GM12878 (cell line): ENCODE measurements at regions of chr6 and their contacts with region 1.

Region 1: GRCh38 chr6:127484212-127484858 is 25.1 kb upstream of the KIAA0408 start:
- DNase-seq: peak; percentile 39
- ATAC-seq: peak; percentile 98
- H3K4me3 ChIP-seq: peak overlapping the region; percentile 9; the same call in 1 of the 2 replicates
- H3K27ac ChIP-seq: peak overlapping the region; percentile 19; the same call in 1 of the 2 replicates
- H3K4me1 ChIP-seq: peaks cover 9% of the 10 kb centered on the region
- H3K27me3 ChIP-seq: no peaks in the 10 kb centered on the region
- CTCF ChIP-seq: no peak
- EP300 ChIP-seq: no peak; a peak in 1 of 4 replicates
- POLR2A ChIP-seq: no peak
- RAD21 ChIP-seq: no peak

Region 2: DNA sequence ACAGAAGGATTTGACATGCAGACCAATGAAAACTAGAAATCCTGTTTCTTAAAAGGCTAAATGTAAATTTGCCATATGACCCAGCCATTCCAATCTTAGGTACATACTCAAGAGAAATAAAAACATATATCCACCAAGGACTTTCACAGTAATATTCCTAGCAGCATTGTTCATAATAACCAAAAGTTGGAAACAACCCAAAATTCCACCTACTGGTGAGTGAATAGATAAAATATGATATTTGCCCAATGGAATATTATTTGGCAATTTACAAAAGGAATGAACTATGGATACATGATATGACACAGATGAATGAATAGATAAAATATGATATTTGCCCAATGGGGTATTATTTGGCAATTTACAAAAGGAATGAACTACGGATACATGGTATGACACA is 12.1 kb after region 1 on chr6:
- CTCF ChIA-PET with region 1: interaction called, 6 read pairs
- POLR2A ChIA-PET with region 1: interaction called, 3 read pairs
- RAD21 ChIA-PET with region 1: interaction called, 4 read pairs
- SMC1A ChIA-PET with region 1: interaction called, 21 read pairs
- in situ Hi-C with region 1: no loop called
- intact Hi-C with region 1: no loop called
- DNase-seq: no peak
- ATAC-seq: no peak
- H3K4me3 ChIP-seq: no peak overlapping the region
- H3K27ac ChIP-seq: no peak overlapping the region
- H3K4me1 ChIP-seq: no peaks in the 10 kb centered on the region
- H3K27me3 ChIP-seq: no peaks in the 10 kb centered on the region
- CTCF ChIP-seq: no peak
- EP300 ChIP-seq: no peak
- POLR2A ChIP-seq: no peak
- RAD21 ChIP-seq: no peak

Region 3: GRCh38 chr6:127570739-127571389 is 86.5 kb after region 1 on chr6:
- CTCF ChIA-PET with region 1: no interaction called
- POLR2A ChIA-PET with region 1: no interaction called
- RAD21 ChIA-PET with region 1: no interaction called
- SMC1A ChIA-PET with region 1: no interaction called
- in situ Hi-C with region 1: no loop called
- intact Hi-C with region 1: no loop called
- DNase-seq: no peak
- ATAC-seq: peak; percentile 84
- H3K4me3 ChIP-seq: no peak overlapping the region
- H3K27ac ChIP-seq: no peak overlapping the region
- H3K4me1 ChIP-seq: no peaks in the 10 kb centered on the region
- H3K27me3 ChIP-seq: no peaks in the 10 kb centered on the region
- CTCF ChIP-seq: no peak
- EP300 ChIP-seq: peak in 1 of 2 experiments; percentile 37; a peak in 1 of 4 replicates
- POLR2A ChIP-seq: no peak
- RAD21 ChIP-seq: no peak